MCF 10A (cell line): ENCODE measurements at regions of chr5 and their contacts with region 1.

Region 1: DNA sequence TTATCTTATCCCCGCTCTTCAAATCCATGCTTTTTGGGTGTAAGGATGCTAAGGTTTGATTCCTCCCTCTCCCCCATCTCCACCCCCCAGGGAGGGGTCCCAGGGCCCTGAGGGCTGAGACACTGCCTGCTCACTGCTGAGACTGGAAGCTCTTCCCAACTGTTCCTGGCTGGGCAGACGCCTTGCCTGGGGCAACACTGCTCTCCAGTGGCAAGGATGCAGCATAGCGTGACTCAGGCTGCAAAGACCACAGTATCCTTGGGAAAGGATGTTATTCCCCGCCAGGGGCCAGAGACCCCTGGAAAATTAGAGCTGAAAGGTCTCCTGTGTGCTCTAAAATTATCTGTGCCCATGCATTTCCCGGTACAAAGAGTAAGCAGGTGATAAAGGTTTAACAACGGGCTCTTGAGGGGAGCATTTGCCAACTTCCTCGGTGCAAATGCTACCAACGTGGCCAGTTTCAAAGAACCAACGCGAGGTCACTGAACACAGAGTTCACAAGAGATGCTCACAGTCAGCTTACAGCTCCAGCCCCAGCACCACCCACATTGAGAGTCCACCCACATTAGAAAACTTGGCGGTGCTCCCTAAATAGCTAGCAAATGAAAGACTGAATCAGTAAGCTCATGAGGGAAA is 271.9 kb downstream of the NSG2 start:
- DNase-seq: peak; percentile 70
- H3K4me3 Mint-ChIP-seq: no peak overlapping the region
- H3K27ac Mint-ChIP-seq: no peak overlapping the region
- H3K4me1 Mint-ChIP-seq: no peaks in the 10 kb centered on the region
- H3K27me3 Mint-ChIP-seq: peaks cover 71% of the 10 kb centered on the region
- CTCF ChIP-seq: peak; percentile 97

Region 2: DNA sequence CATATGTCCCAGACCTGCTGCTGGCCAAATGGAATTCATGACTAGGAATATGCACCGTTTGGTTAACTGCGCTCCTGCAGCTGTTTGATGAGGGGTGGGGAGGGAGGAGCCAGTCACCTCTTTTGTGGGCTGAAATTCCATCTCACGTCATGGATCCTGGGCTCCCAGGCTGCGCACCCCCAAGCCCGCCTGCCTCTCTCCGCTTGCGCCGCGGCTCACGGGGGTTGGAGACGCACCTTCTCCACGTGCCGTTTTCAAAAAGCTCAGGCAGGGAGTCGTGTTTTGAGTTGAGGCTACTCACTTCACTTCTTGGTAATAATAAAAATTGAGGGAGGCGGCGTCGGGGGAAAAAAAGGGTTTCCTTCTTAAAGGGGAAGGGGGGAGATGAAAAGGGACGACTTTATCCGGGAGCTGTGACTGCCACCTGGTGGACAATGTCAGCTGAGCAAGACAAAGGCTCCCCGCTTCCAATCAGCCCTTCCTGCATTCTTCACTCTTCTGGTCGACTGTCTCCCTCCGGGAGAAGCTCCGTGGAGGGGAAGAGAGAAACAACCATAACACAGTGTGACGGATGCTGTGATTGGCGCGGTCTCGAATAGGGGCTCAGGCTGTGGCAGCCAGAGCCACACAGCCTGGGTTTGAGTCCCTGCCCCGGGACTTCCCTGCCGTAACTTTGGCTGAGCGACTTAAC is 344.3 kb before region 1 on chr5:
- CTCF ChIA-PET with region 1: interaction called, 32 read pairs
- POLR2A ChIA-PET with region 1: no interaction called
- intact Hi-C with region 1: loop called (anchors 1 kb)
- DNase-seq: peak; percentile 87
- H3K4me3 Mint-ChIP-seq: peak overlapping the region; percentile 59
- H3K27ac Mint-ChIP-seq: peak overlapping the region; percentile 57
- H3K4me1 Mint-ChIP-seq: peaks cover 23% of the 10 kb centered on the region
- H3K27me3 Mint-ChIP-seq: peaks cover 20% of the 10 kb centered on the region
- CTCF ChIP-seq: peak; percentile 95

Region 3: GRCh38 chr5:174045470-174046025 is 271.8 kb before region 1 on chr5 and contains the start of gene NSG2:
- CTCF ChIA-PET with region 1: interaction called, 588 read pairs
- POLR2A ChIA-PET with region 1: interaction called, 31 read pairs
- intact Hi-C with region 1: loop called (anchors 1 kb)
- DNase-seq: peak; percentile 96
- H3K4me3 Mint-ChIP-seq: no peak within 1 kb of the TSS
- H3K27ac Mint-ChIP-seq: no peak within 1 kb of the TSS
- H3K4me1 Mint-ChIP-seq: no peaks in the 10 kb centered on the region
- H3K27me3 Mint-ChIP-seq: peaks cover 42% of the 10 kb centered on the region
- CTCF ChIP-seq: peak; percentile 99
- total RNA-seq, gene NSG2: not detected in 2 replicates

Region 4: DNA sequence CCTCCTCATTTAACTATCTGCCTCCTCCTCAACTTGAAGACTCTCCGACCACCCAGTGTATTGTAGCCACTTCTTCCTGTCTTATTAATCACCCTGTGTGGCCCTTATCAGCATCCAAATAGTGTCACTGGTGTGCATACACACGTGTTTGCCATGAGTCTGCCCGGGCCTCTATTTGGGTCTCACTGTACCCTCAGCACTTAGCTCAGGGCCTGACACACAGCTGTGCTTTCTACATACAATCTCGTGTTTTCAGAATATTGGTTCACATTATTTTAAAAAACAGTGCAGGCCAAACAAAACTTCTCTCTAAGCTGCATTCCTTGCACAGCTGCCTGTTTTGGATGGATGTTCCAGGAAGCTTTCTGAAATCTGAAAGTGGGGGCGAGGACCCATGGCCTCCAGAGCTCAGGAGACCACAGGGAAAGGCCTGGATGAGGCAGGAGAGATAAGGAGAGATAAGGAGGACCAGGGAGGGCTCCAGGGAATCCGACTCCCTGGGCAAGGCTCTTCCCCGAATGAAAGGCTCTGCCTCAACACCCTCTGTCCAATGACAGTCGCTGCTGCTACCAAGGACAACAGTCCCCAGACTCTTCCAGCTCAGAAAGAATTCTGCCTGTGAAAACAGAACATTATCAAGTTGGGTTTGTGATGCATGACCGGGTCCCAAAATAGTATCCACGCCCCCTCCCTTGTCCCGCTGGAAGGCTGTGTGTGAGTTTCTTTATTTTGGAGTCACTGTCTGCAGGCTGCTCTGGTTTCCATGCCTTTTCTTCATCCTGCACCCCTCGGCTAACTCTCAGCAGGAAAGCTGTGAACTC is 16.2 kb before region 1 on chr5:
- CTCF ChIA-PET with region 1: interaction called, 31 read pairs
- POLR2A ChIA-PET with region 1: no interaction called
- intact Hi-C with region 1: no loop called
- DNase-seq: no peak
- H3K4me3 Mint-ChIP-seq: no peak overlapping the region
- H3K27ac Mint-ChIP-seq: no peak overlapping the region
- H3K4me1 Mint-ChIP-seq: no peaks in the 10 kb centered on the region
- H3K27me3 Mint-ChIP-seq: peaks cover 43% of the 10 kb centered on the region
- CTCF ChIP-seq: no peak